ENCODE measurements at regions of chr19 and their contacts with region 1.

Region 1: GRCh38 chr19:6125571-6125989 is 9.9 kb upstream of the ACSBG2 start:
- DNase-seq: peak; percentile 32
- ATAC-seq: peak; percentile 97
- H3K4me3 Mint-ChIP-seq: no peak overlapping the region
- H3K27ac Mint-ChIP-seq: no peak overlapping the region
- H3K4me1 Mint-ChIP-seq: peaks cover 5% of the 10 kb centered on the region
- H3K27me3 Mint-ChIP-seq: peaks cover 2% of the 10 kb centered on the region
- CTCF ChIP-seq: no peak

Region 2: GRCh38 chr19:5308471-5309437 is 816.8 kb before region 1 on chr19:
- CTCF ChIA-PET with region 1: no interaction called
- POLR2A ChIA-PET with region 1: no interaction called
- intact Hi-C with region 1: no loop called
- DNase-seq: no peak
- ATAC-seq: no peak
- H3K4me3 Mint-ChIP-seq: no peak overlapping the region
- H3K27ac Mint-ChIP-seq: no peak overlapping the region
- H3K4me1 Mint-ChIP-seq: peaks cover 6% of the 10 kb centered on the region
- H3K27me3 Mint-ChIP-seq: no peaks in the 10 kb centered on the region
- CTCF ChIP-seq: no peak

Region 3: GRCh38 chr19:5987077-5987818 is 138.3 kb before region 1 on chr19:
- CTCF ChIA-PET with region 1: interaction called, 5 read pairs
- POLR2A ChIA-PET with region 1: no interaction called
- intact Hi-C with region 1: loop called (anchors 1 kb)
- DNase-seq: peak; percentile 48
- ATAC-seq: peak; percentile 61
- H3K4me3 Mint-ChIP-seq: peak overlapping the region; percentile 78
- H3K27ac Mint-ChIP-seq: no peak overlapping the region
- H3K4me1 Mint-ChIP-seq: peaks cover 23% of the 10 kb centered on the region
- H3K27me3 Mint-ChIP-seq: no peaks in the 10 kb centered on the region
- CTCF ChIP-seq: no peak

Region 4: GRCh38 chr19:6076675-6077463 is 48.7 kb before region 1 on chr19:
- CTCF ChIA-PET with region 1: interaction called, 3 read pairs
- POLR2A ChIA-PET with region 1: no interaction called
- intact Hi-C with region 1: loop called (anchors 1 kb)
- DNase-seq: no peak
- ATAC-seq: no peak
- H3K4me3 Mint-ChIP-seq: no peak overlapping the region
- H3K27ac Mint-ChIP-seq: no peak overlapping the region
- H3K4me1 Mint-ChIP-seq: peaks cover 8% of the 10 kb centered on the region
- H3K27me3 Mint-ChIP-seq: no peaks in the 10 kb centered on the region
- CTCF ChIP-seq: no peak

Region 5: GRCh38 chr19:6087074-6087571 is 38.5 kb before region 1 on chr19:
- CTCF ChIA-PET with region 1: interaction called, 10 read pairs
- POLR2A ChIA-PET with region 1: interaction called, 4 read pairs
- intact Hi-C with region 1: no loop called
- DNase-seq: no peak
- ATAC-seq: peak; percentile 49
- H3K4me3 Mint-ChIP-seq: peak overlapping the region; percentile 73
- H3K27ac Mint-ChIP-seq: peak overlapping the region; percentile 91
- H3K4me1 Mint-ChIP-seq: peaks cover 32% of the 10 kb centered on the region
- H3K27me3 Mint-ChIP-seq: no peaks in the 10 kb centered on the region
- CTCF ChIP-seq: no peak

Region 6: GRCh38 chr19:6100284-6100915 is 25.2 kb before region 1 on chr19:
- CTCF ChIA-PET with region 1: interaction called, 8 read pairs
- POLR2A ChIA-PET with region 1: interaction called, 6 read pairs
- intact Hi-C with region 1: loop called (anchors 1 kb)
- DNase-seq: peak; percentile 37
- ATAC-seq: peak; percentile 87
- H3K4me3 Mint-ChIP-seq: peak overlapping the region; percentile 84
- H3K27ac Mint-ChIP-seq: peak overlapping the region; percentile 84
- H3K4me1 Mint-ChIP-seq: peaks cover 17% of the 10 kb centered on the region
- H3K27me3 Mint-ChIP-seq: no peaks in the 10 kb centered on the region
- CTCF ChIP-seq: no peak